Colonic mucosa (tissue), 4 donors: ENCODE measurements at regions of chr20 and their contacts with region 1.

Region 1: DNA sequence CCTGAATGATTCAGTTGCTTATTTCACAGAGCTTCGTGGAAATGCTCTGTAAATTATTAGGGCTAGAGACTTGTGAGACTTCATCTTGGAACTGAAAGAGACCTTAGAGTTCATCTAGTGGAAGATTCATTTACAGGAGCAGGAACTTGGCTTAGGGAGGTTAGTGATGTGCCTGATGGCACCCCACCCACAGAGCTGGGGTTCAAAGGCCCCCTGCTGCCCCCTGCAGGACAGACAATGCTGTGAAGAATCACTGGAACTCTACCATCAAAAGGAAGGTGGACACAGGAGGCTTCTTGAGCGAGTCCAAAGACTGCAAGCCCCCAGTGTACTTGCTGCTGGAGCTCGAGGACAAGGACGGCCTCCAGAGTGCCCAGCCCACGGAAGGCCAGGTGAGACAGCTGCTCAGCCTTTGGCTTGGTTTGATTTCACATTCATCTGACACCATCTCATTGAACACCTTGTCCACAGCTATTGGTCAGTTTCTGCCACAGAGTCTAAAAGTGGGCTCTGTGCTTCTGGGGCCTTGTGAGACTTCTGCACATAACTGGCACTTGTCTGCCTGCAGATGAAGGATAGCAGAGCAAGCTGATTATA is 25.1 kb downstream of the MYBL2 start:
- DNase-seq: peak; percentile 75
- H3K4me3 ChIP-seq: no peak overlapping the region
- H3K27ac ChIP-seq: no peak overlapping the region
- H3K4me1 ChIP-seq: no peaks in the 10 kb centered on the region
- H3K27me3 ChIP-seq: no peaks in the 10 kb centered on the region
- CTCF ChIP-seq: peak; percentile 56

Region 2: DNA sequence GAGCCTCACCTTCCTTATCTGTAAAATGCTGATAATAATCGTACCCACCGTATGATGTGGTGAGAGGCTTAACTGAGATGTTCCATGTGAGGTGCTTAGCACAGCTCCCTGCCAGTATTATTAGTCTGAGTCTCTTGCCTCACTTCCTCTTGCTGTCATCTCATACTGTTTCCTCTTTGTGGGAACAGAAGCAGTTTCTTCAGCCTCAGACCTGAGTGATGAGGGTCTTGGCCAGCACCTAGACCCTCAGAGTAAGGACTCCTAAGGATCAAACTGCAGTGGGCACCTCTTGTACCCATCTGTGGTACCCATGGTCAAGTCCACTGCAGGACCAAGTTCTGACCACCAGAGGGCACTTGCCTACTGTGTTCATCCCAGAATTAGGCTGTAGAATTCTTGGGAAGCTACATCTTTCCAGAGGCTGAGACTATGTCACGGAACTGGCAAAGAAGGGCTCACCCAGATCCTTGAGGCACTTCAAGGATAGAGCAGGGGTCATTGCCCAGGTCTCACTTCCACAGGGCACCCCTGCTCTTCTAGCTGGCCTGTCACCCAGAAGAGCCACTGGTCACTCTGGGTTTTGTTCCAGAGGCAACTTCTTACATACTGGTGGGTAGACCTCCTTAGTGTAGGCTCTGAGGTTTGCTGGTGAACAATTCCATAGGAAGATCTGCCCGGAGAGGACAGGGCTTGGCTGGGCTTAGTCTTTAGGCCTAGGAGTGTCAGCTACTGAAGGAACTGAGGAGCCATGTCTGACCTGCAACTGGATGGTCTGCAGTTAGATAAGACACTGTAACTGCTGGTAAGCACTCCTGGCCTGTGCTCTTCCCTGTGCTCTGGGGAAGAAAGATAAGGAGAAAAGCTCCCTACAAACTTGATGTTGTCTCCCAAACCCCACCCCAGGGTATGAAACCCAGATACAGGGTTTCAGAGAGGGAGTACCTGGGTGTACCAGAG is 153.8 kb before region 1 on chr20:
- intact Hi-C with region 1: loop called (anchors 2 kb)
- DNase-seq: peak; percentile 80
- H3K4me3 ChIP-seq: no peak overlapping the region
- H3K27ac ChIP-seq: no peak overlapping the region
- H3K4me1 ChIP-seq: no peaks in the 10 kb centered on the region
- H3K27me3 ChIP-seq: no peaks in the 10 kb centered on the region
- CTCF ChIP-seq: peak; percentile 95